Activated CD4-positive, alpha-beta memory T cell treated with anti-CD3 and anti-CD28 coated beads for 36 hours (primary cell): ENCODE measurements at regions of chr1 and their contacts with region 1.

Region 1: DNA sequence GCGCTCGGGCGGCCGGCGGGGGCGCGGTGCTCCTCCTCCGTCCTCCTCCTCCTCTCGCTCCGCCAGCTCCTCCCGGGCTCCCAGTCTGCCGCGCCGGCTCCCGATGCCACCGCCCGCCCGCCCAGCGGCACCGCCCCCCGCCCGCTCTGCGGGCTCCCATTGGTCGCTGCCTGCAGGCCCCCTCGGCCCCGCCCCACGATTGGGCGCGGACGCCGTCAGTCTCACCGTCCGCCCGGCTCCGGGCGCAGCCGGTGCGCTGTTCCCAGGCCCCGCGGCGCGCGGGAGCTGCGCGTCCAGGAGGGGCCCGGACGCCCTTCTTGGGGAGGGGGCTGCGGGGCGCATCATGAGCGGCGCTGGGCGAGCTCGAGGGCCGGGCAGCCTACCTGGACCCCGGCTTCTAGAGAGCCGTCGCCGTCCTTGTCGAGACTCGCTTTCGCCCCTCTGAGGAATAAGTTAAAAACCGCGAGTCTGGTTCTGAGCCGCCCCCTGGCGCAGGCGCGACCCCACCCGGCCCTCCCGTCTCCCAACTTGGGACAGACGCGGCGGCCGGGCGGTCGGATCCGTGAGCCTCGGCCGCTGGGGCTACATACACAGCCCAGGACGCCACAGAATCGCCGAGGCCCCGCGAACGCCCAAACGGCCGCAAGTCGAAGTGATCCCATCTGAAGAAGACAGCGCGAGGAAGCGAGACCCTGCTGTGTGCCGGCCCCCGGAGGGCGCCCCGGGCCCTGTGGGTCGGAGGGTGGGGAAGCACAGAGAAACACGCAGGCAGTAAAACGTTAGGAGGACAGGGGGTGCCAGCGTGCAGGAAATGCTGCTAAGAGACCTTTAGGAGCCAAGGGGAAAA is at the start of gene SIPA1L2:
- DNase-seq: peak; percentile 91
- H3K4me3 Mint-ChIP-seq: peak within 1 kb of the TSS; percentile 84
- H3K27ac Mint-ChIP-seq: peak within 1 kb of the TSS; percentile 75
- H3K4me1 Mint-ChIP-seq: peaks cover 34% of the 10 kb centered on the region
- H3K27me3 Mint-ChIP-seq: peaks cover 12% of the 10 kb centered on the region
- total RNA-seq, gene SIPA1L2: 6.1 to 6.2 TPM

Region 2: DNA sequence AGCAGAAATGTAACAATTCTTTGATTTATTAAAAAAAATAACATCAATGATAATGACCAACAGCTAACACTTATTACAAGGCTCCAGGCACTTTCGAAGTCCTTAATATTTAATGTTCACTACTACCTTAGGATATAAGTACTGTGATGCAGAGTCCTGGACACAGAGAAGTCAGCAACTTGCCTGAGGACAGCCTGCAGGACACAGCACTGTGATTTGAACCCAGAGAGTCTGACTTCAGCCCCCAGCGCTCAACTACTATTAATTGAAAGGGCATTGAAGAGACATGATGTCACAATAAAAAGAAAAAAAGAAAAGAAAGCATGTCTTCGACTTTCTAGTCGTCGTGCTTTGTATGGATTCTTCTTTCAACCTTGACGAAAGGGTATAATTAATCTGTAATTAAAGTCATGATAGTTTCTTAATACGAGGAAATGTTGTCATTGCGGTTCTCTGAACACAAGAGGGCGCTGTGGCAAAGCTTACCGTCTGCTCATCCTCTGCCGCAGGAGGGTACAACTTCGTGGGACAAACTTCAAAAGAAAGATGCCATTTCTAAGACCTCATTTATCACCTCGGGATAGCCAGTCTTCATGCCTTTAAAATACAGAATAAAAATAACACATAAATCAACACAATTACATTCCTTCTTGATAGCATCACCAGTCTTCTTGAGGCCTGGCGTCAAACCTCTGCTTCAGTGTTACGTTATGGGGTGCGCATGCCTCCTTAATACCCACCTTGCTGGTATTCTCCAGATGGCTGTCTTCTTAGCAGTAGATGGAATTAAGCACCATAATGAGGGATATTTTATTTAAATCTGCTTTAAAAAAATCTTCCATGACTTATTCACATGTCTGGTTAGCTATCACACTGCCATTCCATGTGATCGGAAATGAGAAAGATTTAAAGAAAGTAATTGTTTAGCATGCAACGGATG is 763.6 kb before region 1 on chr1:
- CTCF ChIA-PET with region 1: interaction called, 8 read pairs
- POLR2A ChIA-PET with region 1: no interaction called
- intact Hi-C with region 1: loop called (anchors 2 kb)
- DNase-seq: peak; percentile 68
- H3K4me3 Mint-ChIP-seq: no peak overlapping the region
- H3K27ac Mint-ChIP-seq: no peak overlapping the region
- H3K4me1 Mint-ChIP-seq: peaks cover 15% of the 10 kb centered on the region
- H3K27me3 Mint-ChIP-seq: no peaks in the 10 kb centered on the region

Region 3: GRCh38 chr1:232047474-232047873 is 582.8 kb before region 1 on chr1:
- CTCF ChIA-PET with region 1: no interaction called
- POLR2A ChIA-PET with region 1: no interaction called
- intact Hi-C with region 1: loop called (anchors 10 kb)
- DNase-seq: no peak
- H3K4me3 Mint-ChIP-seq: no peak overlapping the region
- H3K27ac Mint-ChIP-seq: no peak overlapping the region
- H3K4me1 Mint-ChIP-seq: peaks cover 7% of the 10 kb centered on the region
- H3K27me3 Mint-ChIP-seq: no peaks in the 10 kb centered on the region

Region 4: DNA sequence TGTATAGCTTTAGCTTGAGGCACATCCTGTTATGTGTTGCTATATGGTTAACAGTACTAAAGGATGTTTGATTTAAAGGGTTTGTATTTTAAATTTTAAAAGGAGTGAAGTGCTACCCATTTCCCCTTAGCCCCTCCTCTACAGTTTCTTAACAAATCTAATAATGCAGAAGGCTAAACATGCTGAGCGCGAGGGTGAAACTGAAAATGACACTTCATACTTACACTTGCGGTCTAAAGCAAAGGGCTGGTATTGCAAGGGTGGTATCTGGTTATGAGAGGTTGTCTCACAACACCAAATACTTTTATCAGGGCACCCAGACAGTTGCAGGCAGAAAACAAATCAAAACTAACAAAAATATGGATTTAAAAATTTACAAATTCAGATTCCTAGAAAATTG is 172.7 kb before region 1 on chr1:
- CTCF ChIA-PET with region 1: interaction called, 3 read pairs
- POLR2A ChIA-PET with region 1: no interaction called
- intact Hi-C with region 1: loop called (anchors 1 kb)
- DNase-seq: peak; percentile 49
- H3K4me3 Mint-ChIP-seq: no peak overlapping the region
- H3K27ac Mint-ChIP-seq: no peak overlapping the region
- H3K4me1 Mint-ChIP-seq: peaks cover 8% of the 10 kb centered on the region
- H3K27me3 Mint-ChIP-seq: no peaks in the 10 kb centered on the region

Region 5: GRCh38 chr1:232923739-232924386 is 293.6 kb after region 1 on chr1:
- CTCF ChIA-PET with region 1: no interaction called
- POLR2A ChIA-PET with region 1: no interaction called
- intact Hi-C with region 1: loop called (anchors 10 kb)
- DNase-seq: peak; percentile 73
- H3K4me3 Mint-ChIP-seq: peak overlapping the region; percentile 18
- H3K27ac Mint-ChIP-seq: peak overlapping the region; percentile 91
- H3K4me1 Mint-ChIP-seq: peaks cover 40% of the 10 kb centered on the region
- H3K27me3 Mint-ChIP-seq: no peaks in the 10 kb centered on the region

Region 6: GRCh38 chr1:233025157-233025915 is 395.1 kb after region 1 on chr1:
- CTCF ChIA-PET with region 1: no interaction called
- POLR2A ChIA-PET with region 1: no interaction called
- intact Hi-C with region 1: loop called (anchors 10 kb)
- DNase-seq: no peak
- H3K4me3 Mint-ChIP-seq: no peak overlapping the region
- H3K27ac Mint-ChIP-seq: no peak overlapping the region
- H3K4me1 Mint-ChIP-seq: no peaks in the 10 kb centered on the region
- H3K27me3 Mint-ChIP-seq: no peaks in the 10 kb centered on the region

Region 7: DNA sequence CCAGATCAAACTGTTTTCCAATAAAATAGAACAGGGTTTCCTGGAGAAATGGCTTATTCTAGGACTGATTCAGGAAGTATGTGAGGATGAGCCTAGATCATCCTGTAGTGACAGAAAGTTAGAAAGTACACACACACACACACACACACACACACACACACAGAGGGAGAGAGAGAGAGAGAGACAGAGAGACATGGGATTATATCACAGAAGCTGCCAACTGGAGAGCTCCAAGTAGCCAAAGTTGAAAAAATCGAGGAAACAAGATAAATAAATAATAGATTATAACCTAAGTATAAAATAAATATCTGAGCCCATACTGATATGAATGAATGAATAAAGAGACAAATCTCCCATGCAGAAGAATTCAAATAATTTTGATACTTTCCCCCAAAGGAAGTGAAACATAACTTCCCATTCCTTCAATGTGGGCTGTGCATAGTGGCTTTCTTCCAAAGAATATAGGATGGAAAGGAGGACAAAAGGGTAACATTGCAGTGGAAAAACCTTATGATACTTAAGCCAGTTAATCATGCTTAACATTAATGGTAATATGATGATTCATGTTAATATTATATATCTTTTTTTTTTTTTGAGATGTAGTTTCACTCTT is 491.8 kb after region 1 on chr1:
- CTCF ChIA-PET with region 1: no interaction called
- POLR2A ChIA-PET with region 1: no interaction called
- intact Hi-C with region 1: no loop called
- DNase-seq: no peak
- H3K4me3 Mint-ChIP-seq: no peak overlapping the region
- H3K27ac Mint-ChIP-seq: no peak overlapping the region
- H3K4me1 Mint-ChIP-seq: no peaks in the 10 kb centered on the region
- H3K27me3 Mint-ChIP-seq: no peaks in the 10 kb centered on the region